CD4-positive, alpha-beta T cell (primary cell): ENCODE measurements at regions of chr15 and their contacts with region 1.

Region 1: GRCh38 chr15:64355944-64356709 is at the start of gene CSNK1G1:
- DNase-seq: peak; percentile 80 to 97 (median 89)
- ATAC-seq: peak; percentile 96
- H3K4me3 ChIP-seq: peak within 1 kb of the TSS; percentile 95
- H3K4me3 Mint-ChIP-seq: peak within 1 kb of the TSS; percentile 96
- H3K27ac ChIP-seq: peak within 1 kb of the TSS; percentile 49 to 55
- H3K27ac Mint-ChIP-seq: peak within 1 kb of the TSS; percentile 87
- H3K4me1 ChIP-seq: peaks cover 16% of the 10 kb centered on the region
- H3K4me1 Mint-ChIP-seq: peaks cover 22% of the 10 kb centered on the region
- H3K27me3 ChIP-seq: no peaks in the 10 kb centered on the region
- H3K27me3 Mint-ChIP-seq: no peaks in the 10 kb centered on the region
- CTCF ChIP-seq: peak; percentile 34
- total RNA-seq, gene CSNK1G1: 12.2 to 13.7 TPM

Region 2: DNA sequence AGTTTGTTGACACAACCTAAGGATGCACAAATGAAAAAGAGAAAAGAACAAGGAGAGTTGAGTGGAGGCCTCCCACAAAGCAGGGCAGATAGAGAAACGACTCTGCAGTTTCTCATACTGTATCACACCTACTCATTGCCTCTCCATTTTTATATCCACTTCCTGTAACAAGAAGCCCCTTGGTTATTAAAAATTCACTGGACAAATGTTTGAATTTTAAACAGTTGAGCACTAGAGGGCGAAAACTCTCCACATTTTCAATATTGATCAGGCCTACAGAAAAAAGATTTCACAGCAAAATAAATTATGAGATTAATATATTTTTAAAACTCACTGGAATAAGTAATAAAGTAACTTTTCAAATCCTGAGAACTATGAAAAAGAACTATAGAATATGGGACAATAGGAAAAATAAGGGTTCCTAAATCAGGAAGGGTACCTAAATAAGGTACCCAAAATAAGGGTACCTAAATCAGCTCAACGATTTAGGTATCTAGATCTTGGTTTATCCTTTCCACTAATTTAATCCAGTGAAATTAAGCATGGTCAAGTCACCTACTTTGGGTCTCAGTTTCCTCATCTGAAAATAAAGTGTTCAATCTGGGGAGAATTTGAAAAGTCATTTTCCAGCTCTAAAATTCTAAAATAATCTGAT is 146.3 kb before region 1 on chr15:
- CTCF ChIA-PET with region 1: no interaction called
- POLR2A ChIA-PET with region 1: no interaction called
- intact Hi-C with region 1: loop called in 1 of 2 experiments (anchors 2 kb)
- DNase-seq: peak in 3 of 14 experiments; percentile 19 to 27 (median 27)
- ATAC-seq: no peak
- H3K4me3 ChIP-seq: no peak overlapping the region
- H3K4me3 Mint-ChIP-seq: no peak overlapping the region
- H3K27ac ChIP-seq: no peak overlapping the region
- H3K27ac Mint-ChIP-seq: peak overlapping the region; percentile 7
- H3K4me1 ChIP-seq: no peaks in the 10 kb centered on the region
- H3K4me1 Mint-ChIP-seq: no peaks in the 10 kb centered on the region
- H3K27me3 ChIP-seq: no peaks in the 10 kb centered on the region
- H3K27me3 Mint-ChIP-seq: no peaks in the 10 kb centered on the region
- CTCF ChIP-seq: peak; percentile 43